ENCODE measurements at regions of chr15 and their contacts with region 1.

Region 1: GRCh38 chr15:61834076-61834697 is 226.1 kb downstream of the VPS13C start:
- DNase-seq: peak; percentile 75 to 93 (median 86)
- H3K4me3 ChIP-seq: no peak overlapping the region
- H3K27ac ChIP-seq: no peak overlapping the region
- H3K27me3 ChIP-seq: no peaks in the 10 kb centered on the region
- CTCF ChIP-seq: peak; percentile 94 to 100 (median 99)

Region 2: DNA sequence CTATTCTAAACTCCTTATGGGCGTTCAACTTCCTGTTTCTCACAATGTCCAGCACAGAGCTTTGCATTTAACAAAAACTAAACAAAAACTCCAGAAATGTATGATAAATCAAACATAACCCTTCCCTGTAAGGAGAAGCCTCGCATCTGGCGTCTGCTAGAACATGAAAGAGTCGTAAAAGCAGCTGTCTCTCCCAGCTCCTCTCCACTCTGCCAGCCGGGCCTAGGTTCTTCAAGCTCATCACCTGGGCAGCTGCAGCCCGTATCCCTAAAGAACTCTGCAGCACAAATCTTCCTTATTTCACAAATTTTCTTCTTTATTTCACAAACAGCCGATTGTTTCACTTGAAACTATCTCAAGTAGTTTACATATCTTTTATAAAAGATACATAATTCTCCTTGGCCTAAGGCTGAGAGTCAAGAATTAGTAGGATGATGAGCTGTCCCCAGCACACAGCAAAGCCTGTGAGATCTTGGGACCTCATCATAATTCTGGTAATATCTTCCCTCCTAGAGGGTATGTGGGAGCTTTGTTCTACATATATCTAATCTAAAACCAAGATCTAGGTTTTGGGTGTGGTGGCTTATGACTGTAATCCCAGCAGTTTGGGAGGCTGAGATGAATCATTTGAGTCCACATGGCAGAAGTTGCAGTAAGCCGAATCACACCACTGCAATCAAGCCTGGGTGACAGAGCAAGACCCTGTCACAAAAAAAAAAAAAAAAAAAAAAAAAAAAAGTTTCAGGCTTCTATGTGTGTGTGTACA is 1471.7 kb before region 1 on chr15:
- intact Hi-C with region 1: loop called (anchors 10 kb)
- DNase-seq: no peak
- H3K4me3 ChIP-seq: no peak overlapping the region
- H3K27ac ChIP-seq: peak overlapping the region in 1 of 59 donors; percentile 1
- H3K27me3 ChIP-seq: no peaks in the 10 kb centered on the region
- CTCF ChIP-seq: no peak

Region 3: GRCh38 chr15:60507596-60508424 is 1326.4 kb before region 1 on chr15:
- intact Hi-C with region 1: loop called (anchors 10 kb)
- DNase-seq: peak in 2 of 10 donors; percentile 42 to 46
- H3K4me3 ChIP-seq: no peak overlapping the region
- H3K27ac ChIP-seq: peak overlapping the region in 3 of 59 donors; percentile 14 to 46 (median 34)
- H3K27me3 ChIP-seq: no peaks in the 10 kb centered on the region
- CTCF ChIP-seq: peak; percentile 80 to 97 (median 92)

Region 4: GRCh38 chr15:60585743-60586708 is 1248.2 kb before region 1 on chr15:
- intact Hi-C with region 1: loop called (anchors 5 kb)
- DNase-seq: peak in 4 of 10 donors; percentile 37 to 73 (median 62)
- H3K4me3 ChIP-seq: no peak overlapping the region
- H3K27ac ChIP-seq: peak overlapping the region in 1 of 59 donors; percentile 25
- H3K27me3 ChIP-seq: no peaks in the 10 kb centered on the region
- CTCF ChIP-seq: peak; percentile 85 to 98 (median 94)

Region 5: DNA sequence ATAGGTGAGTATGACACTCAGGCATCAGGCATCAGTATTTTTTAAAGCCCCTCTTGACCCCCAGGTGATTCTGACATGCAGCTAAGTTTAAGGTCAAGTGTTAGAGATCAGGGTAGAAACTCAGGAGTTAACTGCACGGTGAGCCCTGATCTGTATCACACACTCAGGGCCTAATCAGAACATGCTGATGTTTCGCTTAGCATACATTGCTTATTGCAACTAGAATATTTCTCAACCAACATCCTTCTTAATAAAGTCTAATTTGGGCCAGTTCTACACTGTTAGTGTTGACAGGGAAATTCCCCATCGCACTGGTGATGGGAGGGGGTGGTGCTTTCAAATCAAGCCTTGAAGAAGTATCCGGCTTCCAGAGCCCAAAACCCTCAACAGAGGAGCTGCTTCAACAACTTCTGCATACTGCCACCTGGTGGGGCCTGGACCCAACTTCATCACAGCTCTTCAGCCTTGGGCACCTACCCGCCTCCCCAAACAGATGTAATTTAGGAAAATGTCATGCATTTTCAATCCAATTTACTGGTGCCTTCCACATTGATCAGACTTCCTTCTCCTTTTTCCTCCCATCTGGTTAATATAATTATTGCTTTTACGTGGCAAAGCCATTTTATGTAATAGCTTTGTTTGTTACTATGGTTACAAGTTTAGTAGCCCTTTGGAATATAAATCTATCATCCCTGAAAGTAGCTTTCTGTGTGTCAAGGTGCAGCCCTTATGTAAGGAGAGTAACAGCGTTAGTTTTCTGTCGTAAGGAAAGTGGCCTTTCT is 917.3 kb before region 1 on chr15:
- intact Hi-C with region 1: loop called in 1 of 2 experiments (anchors 10 kb)
- DNase-seq: peak; percentile 68 to 92 (median 82)
- H3K4me3 ChIP-seq: peak overlapping the region in 27 of 59 donors; percentile 0 to 41 (median 19)
- H3K27ac ChIP-seq: peak overlapping the region in 53 of 59 donors; percentile 3 to 86 (median 68)
- H3K27me3 ChIP-seq: no peaks in the 10 kb centered on the region
- CTCF ChIP-seq: peak; percentile 66 to 96 (median 89)

Region 6: GRCh38 chr15:61118885-61119284 is 715.3 kb before region 1 on chr15:
- intact Hi-C with region 1: loop called in 1 of 2 experiments (anchors 10 kb)
- DNase-seq: no peak
- H3K4me3 ChIP-seq: no peak overlapping the region
- H3K27ac ChIP-seq: no peak overlapping the region
- H3K27me3 ChIP-seq: no peaks in the 10 kb centered on the region
- CTCF ChIP-seq: peak in 20 of 56 donors; percentile 6 to 51 (median 24)

Region 7: GRCh38 chr15:61195116-61196002 is 638.8 kb before region 1 on chr15:
- intact Hi-C with region 1: loop called in 1 of 2 experiments (anchors 10 kb)
- DNase-seq: no peak
- H3K4me3 ChIP-seq: no peak overlapping the region
- H3K27ac ChIP-seq: peak overlapping the region in 12 of 59 donors; percentile 11 to 78 (median 56)
- H3K27me3 ChIP-seq: no peaks in the 10 kb centered on the region
- CTCF ChIP-seq: peak; percentile 26 to 70 (median 58)

Region 8: GRCh38 chr15:61929452-61929851 is 95.3 kb after region 1 on chr15:
- intact Hi-C with region 1: no loop called
- DNase-seq: no peak
- H3K4me3 ChIP-seq: no peak overlapping the region
- H3K27ac ChIP-seq: no peak overlapping the region
- H3K27me3 ChIP-seq: no peaks in the 10 kb centered on the region
- CTCF ChIP-seq: no peak